GM12878 (cell line): ENCODE measurements at regions of chr11 and their contacts with region 1.

Region 1: GRCh38 chr11:9573052-9573774 is at the start of gene WEE1:
- DNase-seq: peak; percentile 86
- ATAC-seq: peak; percentile 94
- H3K4me3 ChIP-seq: peak within 1 kb of the TSS; percentile 90
- H3K27ac ChIP-seq: peak within 1 kb of the TSS; percentile 90
- H3K4me1 ChIP-seq: peaks cover 6% of the 10 kb centered on the region; the same call in 1 of the 2 replicates
- H3K27me3 ChIP-seq: no peaks in the 10 kb centered on the region
- CTCF ChIP-seq: no peak
- EP300 ChIP-seq: no peak
- POLR2A ChIP-seq: peak; percentile 84
- RAD21 ChIP-seq: no peak
- polyA plus RNA-seq, gene WEE1: 20.6 to 22.2 TPM

Region 2: DNA sequence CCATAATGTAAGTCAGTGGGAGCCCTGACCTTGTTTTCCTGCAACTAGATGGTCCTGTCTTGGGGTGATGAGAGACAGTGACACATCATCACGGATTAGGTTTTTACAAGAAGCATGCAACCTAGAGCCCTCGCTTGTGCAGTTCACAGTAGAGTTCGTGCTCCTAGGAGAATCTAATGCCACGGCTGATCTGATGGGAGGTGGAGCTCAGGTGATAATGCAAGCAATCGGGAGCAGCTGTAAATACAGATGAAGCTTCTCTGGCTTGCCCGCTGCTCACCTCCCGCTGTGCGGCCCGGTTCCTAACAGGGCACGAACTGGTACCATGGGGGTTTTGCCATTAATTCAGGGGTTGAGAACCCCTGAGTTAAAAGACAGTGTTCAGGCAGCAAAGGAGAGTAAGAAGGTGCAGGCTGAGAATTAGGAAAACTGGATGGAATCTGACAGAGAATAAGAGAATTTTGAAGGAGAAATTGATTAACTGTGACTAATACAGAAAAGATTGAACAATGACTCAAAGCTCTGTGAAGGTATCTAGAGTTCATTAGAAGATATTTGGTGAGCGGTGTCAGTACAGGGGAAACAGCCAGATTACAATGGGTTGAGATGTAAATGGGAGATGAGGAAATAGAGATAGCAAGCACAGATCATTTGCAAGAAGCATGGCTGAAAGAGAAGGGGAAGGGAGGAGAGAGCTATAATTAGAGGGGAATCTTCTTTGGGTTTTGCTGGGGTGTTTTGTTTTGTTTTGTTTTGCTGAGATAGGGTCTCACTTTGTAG is 21.2 kb after region 1 on chr11:
- CTCF ChIA-PET with region 1: interaction called, 24 read pairs
- POLR2A ChIA-PET with region 1: interaction called, 18 read pairs
- RAD21 ChIA-PET with region 1: interaction called, 46 read pairs
- SMC1A ChIA-PET with region 1: interaction called, 64 read pairs
- in situ Hi-C with region 1: no loop called
- intact Hi-C with region 1: no loop called
- DNase-seq: no peak
- ATAC-seq: no peak
- H3K4me3 ChIP-seq: no peak overlapping the region
- H3K27ac ChIP-seq: no peak overlapping the region
- H3K4me1 ChIP-seq: peaks cover 24% of the 10 kb centered on the region
- H3K27me3 ChIP-seq: no peaks in the 10 kb centered on the region
- CTCF ChIP-seq: no peak
- EP300 ChIP-seq: no peak
- POLR2A ChIP-seq: no peak
- RAD21 ChIP-seq: no peak